ENCODE measurements at regions of chr2 and their contacts with region 1.

Region 1: DNA sequence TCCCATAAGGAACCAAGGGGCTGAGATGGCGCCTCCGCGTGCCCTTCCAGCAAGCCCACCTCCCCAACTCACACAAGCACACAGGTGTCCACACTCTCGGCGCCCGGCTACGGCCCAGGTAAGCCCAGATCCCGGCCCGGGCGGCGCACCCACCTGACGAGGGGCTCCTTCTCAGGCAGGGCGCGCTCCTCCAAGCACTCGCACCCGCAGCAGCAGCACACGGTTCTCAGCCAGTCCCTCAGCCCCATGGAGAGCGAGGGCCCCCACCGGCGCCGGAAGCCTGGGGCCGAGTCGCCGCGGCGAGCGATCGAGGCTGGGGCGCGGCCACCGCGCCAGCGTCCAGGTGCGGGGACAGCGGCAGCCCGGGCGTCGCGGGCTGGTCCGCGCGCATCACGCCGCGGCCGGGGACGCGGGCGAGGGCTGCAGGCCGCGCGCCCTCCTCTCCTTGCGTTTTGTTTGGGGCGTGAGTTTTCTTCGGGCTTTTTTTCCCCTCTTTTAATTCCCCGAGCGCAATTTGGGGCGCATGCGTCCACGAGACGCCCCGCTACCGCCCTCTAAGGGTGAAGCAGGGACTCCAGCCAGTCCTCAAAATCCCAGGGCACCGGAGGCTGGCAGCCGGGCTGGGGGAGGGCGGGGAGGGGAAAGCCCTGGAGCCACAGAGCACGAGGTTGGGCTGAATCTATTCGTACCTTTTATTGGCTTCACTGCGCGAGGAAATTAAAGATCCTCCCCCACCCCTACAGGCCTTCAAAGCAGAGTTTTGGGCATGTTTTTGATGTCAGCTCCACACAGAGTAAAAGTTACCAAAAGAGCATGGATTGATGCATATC is at the start of gene MREG:
- DNase-seq: peak; percentile 92
- H3K4me3 ChIP-seq: peak within 1 kb of the TSS; percentile 41 to 84 (median 56)
- H3K27ac ChIP-seq: peak within 1 kb of the TSS in 5 of 8 donors; percentile 27 to 66 (median 49)
- H3K4me1 ChIP-seq: peaks cover 3 to 48% (median 28%) of the 10 kb centered on the region in 6 donors
- H3K27me3 ChIP-seq: no peaks in the 10 kb centered on the region
- CTCF ChIP-seq: peak in 9 of 11 experiments; percentile 18 to 83 (median 81)
- POLR2A ChIP-seq: no peak
- total RNA-seq, gene MREG: 4.6 to 8.3 (median 6.6) TPM

Region 2: DNA sequence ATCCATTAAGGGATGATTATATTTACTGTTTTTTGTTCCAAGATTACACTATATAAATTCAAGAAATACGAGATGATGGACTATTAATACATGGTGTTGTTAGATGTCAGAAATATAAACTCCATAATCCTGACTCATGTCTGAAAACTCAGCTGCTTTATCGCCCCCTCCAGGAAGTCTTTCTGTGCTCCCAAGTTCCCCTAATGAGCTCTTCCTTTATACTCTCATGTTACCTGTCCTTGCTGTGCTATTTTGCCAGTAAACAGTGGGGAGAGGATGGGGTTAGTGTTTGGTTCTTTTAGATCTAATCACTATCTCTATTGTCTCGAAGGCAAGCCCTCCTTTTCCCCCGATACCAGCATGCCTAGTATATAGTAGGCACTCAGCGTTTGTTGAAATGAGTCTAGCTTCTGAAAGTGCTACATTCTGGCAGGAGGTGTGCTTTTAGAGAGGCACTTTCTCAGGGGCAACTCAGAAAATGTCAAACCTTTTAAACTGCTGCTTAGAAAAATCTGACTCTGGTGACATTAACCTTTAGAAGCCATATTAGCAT is 1182.4 kb before region 1 on chr2:
- intact Hi-C with region 1: no loop called
- DNase-seq: no peak
- H3K4me3 ChIP-seq: no peak overlapping the region
- H3K27ac ChIP-seq: no peak overlapping the region
- H3K4me1 ChIP-seq: no peaks in the 10 kb centered on the region
- H3K27me3 ChIP-seq: no peaks in the 10 kb centered on the region
- CTCF ChIP-seq: peak in 6 of 11 experiments; percentile 3 to 45 (median 24)
- POLR2A ChIP-seq: no peak

Region 3: GRCh38 chr2:215949991-215950404 is 63.3 kb before region 1 on chr2:
- intact Hi-C with region 1: loop called (anchors 10 kb)
- DNase-seq: no peak
- H3K4me3 ChIP-seq: no peak overlapping the region
- H3K27ac ChIP-seq: no peak overlapping the region
- H3K4me1 ChIP-seq: no peaks in the 10 kb centered on the region
- H3K27me3 ChIP-seq: no peaks in the 10 kb centered on the region
- CTCF ChIP-seq: peak in 7 of 11 experiments; percentile 15 to 45 (median 33)
- POLR2A ChIP-seq: no peak

Measured in spleen (tissue), 13 donors.